ENCODE measurements at regions of chr12 and their contacts with region 1.

Region 1: GRCh38 chr12:53005986-53006809 is at the start of gene EIF4B:
- DNase-seq: peak; percentile 99
- H3K4me3 Mint-ChIP-seq: peak within 1 kb of the TSS; percentile 95
- H3K27ac Mint-ChIP-seq: peak within 1 kb of the TSS; percentile 97
- H3K4me1 Mint-ChIP-seq: peaks cover 35% of the 10 kb centered on the region
- H3K27me3 Mint-ChIP-seq: peaks cover 4% of the 10 kb centered on the region
- total RNA-seq, gene EIF4B: 463 and 473 TPM in 2 replicates

Region 2: DNA sequence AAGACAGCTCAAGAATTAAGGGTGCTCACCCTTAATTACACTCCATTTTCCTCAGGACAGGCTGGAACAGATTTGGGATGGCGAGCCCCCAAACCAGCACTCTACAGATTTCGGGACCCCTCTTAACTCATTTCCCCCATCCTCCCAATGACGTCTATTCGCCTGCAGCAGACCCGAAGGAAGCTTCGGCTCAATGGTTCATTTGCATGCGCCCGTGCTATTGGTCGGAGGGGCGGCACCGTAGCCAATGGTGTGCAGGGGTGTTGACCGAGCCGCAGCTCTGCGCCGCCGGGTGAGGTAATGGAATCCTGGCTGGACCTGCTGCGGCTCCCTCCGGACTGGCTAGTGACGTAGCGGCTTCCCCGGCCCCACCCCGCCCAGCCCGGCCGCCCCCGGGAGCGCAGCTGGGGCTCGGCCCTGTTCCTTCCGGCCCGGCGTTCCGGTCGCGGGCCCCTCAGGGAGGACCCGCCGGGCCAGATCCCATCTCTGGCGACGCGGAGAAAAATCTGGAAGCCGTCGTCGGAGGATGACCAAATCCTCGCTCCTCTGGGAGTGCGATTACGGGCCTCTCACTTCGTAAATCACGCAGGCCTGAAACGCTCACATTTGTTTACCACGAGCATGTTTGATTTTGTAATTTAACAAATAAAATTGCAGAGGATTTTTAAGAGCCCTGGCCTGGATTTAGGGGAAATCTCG is 973.2 kb before region 1 on chr12:
- intact Hi-C with region 1: loop called (anchors 10 kb)
- DNase-seq: peak; percentile 90
- H3K4me3 Mint-ChIP-seq: peak overlapping the region; percentile 72
- H3K27ac Mint-ChIP-seq: peak overlapping the region; percentile 74
- H3K4me1 Mint-ChIP-seq: peaks cover 44% of the 10 kb centered on the region
- H3K27me3 Mint-ChIP-seq: peaks cover 15% of the 10 kb centered on the region

Region 3: GRCh38 chr12:53054112-53054833 is 48.1 kb after region 1 on chr12:
- intact Hi-C with region 1: loop called (anchors 1 kb)
- DNase-seq: peak; percentile 87
- H3K4me3 Mint-ChIP-seq: peak overlapping the region; percentile 93
- H3K27ac Mint-ChIP-seq: peak overlapping the region; percentile 93
- H3K4me1 Mint-ChIP-seq: peaks cover 18% of the 10 kb centered on the region
- H3K27me3 Mint-ChIP-seq: no peaks in the 10 kb centered on the region

Region 4: GRCh38 chr12:53205747-53206419 is 199.7 kb after region 1 on chr12:
- intact Hi-C with region 1: loop called (anchors 5 kb)
- DNase-seq: peak; percentile 74
- H3K4me3 Mint-ChIP-seq: peak overlapping the region; percentile 82
- H3K27ac Mint-ChIP-seq: peak overlapping the region; percentile 90
- H3K4me1 Mint-ChIP-seq: peaks cover 67% of the 10 kb centered on the region
- H3K27me3 Mint-ChIP-seq: no peaks in the 10 kb centered on the region

Region 5: GRCh38 chr12:53451661-53452158 is 445.5 kb after region 1 on chr12 and contains the start of gene PCBP2:
- intact Hi-C with region 1: loop called (anchors 1 kb)
- DNase-seq: peak; percentile 97
- H3K4me3 Mint-ChIP-seq: peak within 1 kb of the TSS; percentile 97
- H3K27ac Mint-ChIP-seq: peak within 1 kb of the TSS; percentile 99
- H3K4me1 Mint-ChIP-seq: peaks cover 29% of the 10 kb centered on the region
- H3K27me3 Mint-ChIP-seq: no peaks in the 10 kb centered on the region
- total RNA-seq, gene PCBP2: 865 and 896 TPM in 2 replicates

Region 6: GRCh38 chr12:53727310-53728041 is 721.3 kb after region 1 on chr12 and contains the start of gene CALCOCO1:
- intact Hi-C with region 1: loop called (anchors 1 kb)
- DNase-seq: peak; percentile 96
- H3K4me3 Mint-ChIP-seq: peak within 1 kb of the TSS; percentile 92
- H3K27ac Mint-ChIP-seq: peak within 1 kb of the TSS; percentile 80
- H3K4me1 Mint-ChIP-seq: peaks cover 26% of the 10 kb centered on the region
- H3K27me3 Mint-ChIP-seq: no peaks in the 10 kb centered on the region
- total RNA-seq, gene CALCOCO1: 17.4 and 19.2 TPM in 2 replicates